Activated T-helper 1 cell treated with anti-CD3 and anti-CD28 coated beads, Interleukin-12 subunit alpha, Interleukin-12 subunit beta, Interleukin-2, Interleukin-4 antibody, amounts not matched to agents 30 ng/mL and 10 ng/mL and 1 ng/mL, durations not matched to agents 14 hours and 24 hours and 36 hours (primary cell): ENCODE measurements at regions of chr19 and their contacts with region 1.

Region 1: DNA sequence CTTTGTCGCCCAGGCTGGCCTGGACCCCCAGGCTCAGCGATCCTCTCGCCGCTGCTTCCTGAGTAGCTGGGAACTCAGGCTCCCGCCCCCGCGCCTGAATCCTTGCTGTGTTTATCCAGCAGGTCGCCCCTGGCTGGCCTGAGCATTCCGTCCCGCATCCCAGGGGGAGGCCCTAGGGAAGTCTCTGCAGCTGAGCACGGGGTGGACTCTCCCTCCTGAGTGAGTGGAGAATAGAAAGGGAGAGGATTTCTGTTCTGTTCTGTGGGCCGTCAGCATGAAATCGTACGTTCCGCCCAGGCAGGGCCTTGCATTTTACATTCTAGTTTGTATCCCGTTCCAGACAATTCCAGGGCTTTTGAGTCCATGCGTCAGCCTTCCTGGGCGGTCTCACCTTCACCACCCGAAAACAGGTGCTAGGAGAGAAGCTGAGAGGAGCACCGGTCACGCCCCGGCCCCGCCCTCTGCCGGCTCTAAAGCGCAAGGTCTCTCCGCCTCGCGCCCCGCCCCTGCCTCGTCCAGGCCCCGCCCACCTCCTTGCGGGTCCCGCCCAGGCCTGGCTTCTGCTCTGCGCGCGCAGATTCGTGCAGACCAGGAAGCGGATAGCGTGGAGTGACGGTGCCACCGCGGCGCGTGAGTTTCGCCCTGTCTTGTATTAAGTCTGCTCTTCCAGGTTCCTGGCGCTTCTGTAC is at the start of gene ZNF761:
- DNase-seq: peak; percentile 96
- H3K4me3 Mint-ChIP-seq: peak within 1 kb of the TSS; percentile 88
- H3K27ac Mint-ChIP-seq: peak within 1 kb of the TSS; percentile 94
- H3K4me1 Mint-ChIP-seq: peaks cover 25% of the 10 kb centered on the region
- H3K27me3 Mint-ChIP-seq: no peaks in the 10 kb centered on the region
- total RNA-seq, gene ZNF761: 9.9 and 12.3 TPM in 2 replicates

Region 2: GRCh38 chr19:53365134-53365898 is 66.2 kb before region 1 on chr19 and contains the start of gene ZNF525:
- intact Hi-C with region 1: loop called (anchors 1 kb)
- DNase-seq: peak; percentile 93
- H3K4me3 Mint-ChIP-seq: peak within 1 kb of the TSS; percentile 93
- H3K27ac Mint-ChIP-seq: peak within 1 kb of the TSS; percentile 91
- H3K4me1 Mint-ChIP-seq: peaks cover 17% of the 10 kb centered on the region
- H3K27me3 Mint-ChIP-seq: no peaks in the 10 kb centered on the region
- total RNA-seq, gene ZNF525: 16.5 and 19.0 TPM in 2 replicates

Region 3: GRCh38 chr19:53394974-53395839 is 36.3 kb before region 1 on chr19 and contains the start of gene ZNF765:
- intact Hi-C with region 1: loop called (anchors 1 kb)
- DNase-seq: peak; percentile 93
- H3K4me3 Mint-ChIP-seq: peak within 1 kb of the TSS; percentile 98
- H3K27ac Mint-ChIP-seq: peak within 1 kb of the TSS; percentile 85
- H3K4me1 Mint-ChIP-seq: peaks cover 27% of the 10 kb centered on the region
- H3K27me3 Mint-ChIP-seq: no peaks in the 10 kb centered on the region
- total RNA-seq, gene ZNF765: 9.2 and 10.8 TPM in 2 replicates

Region 4: GRCh38 chr19:53467485-53468262 is 36.1 kb after region 1 on chr19 and contains the start of gene ZNF813:
- intact Hi-C with region 1: loop called (anchors 1 kb)
- DNase-seq: peak; percentile 89
- H3K4me3 Mint-ChIP-seq: peak within 1 kb of the TSS; percentile 89
- H3K27ac Mint-ChIP-seq: peak within 1 kb of the TSS; percentile 68
- H3K4me1 Mint-ChIP-seq: peaks cover 13% of the 10 kb centered on the region
- H3K27me3 Mint-ChIP-seq: peaks cover 4% of the 10 kb centered on the region
- total RNA-seq, gene ZNF813: 3.7 and 4.3 TPM in 2 replicates

Region 5: GRCh38 chr19:53537480-53538383 is 106.2 kb after region 1 on chr19 and contains the start of gene ZNF331:
- intact Hi-C with region 1: loop called (anchors 1 kb)
- DNase-seq: peak; percentile 84
- H3K4me3 Mint-ChIP-seq: peak within 1 kb of the TSS; percentile 96
- H3K27ac Mint-ChIP-seq: peak within 1 kb of the TSS; percentile 97
- H3K4me1 Mint-ChIP-seq: no peaks in the 10 kb centered on the region
- H3K27me3 Mint-ChIP-seq: no peaks in the 10 kb centered on the region
- total RNA-seq, gene ZNF331: 17.9 and 19.6 TPM in 2 replicates